ENCODE measurements at regions of chr1 and their contacts with region 1.

Region 1: DNA sequence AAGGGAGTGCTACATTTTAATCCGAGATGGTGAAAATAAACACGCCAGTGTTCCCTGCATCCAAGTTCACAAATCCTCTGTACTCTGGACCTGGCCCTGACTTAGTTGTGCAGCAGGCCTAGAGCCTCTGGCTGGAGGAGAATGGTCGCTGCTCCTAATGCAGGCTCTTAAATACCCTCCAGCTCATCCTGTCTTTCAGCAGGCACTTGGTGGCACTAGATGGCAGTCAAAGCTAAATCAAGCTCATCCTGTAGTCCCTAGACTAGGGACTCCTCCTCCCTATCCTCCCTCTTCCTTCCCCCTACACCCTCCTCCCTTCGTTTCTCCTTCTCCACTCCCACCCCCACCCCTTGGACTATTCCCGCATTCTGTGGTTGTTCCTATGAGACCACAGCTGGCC is 41.6 kb upstream of the MTR start:
- DNase-seq: peak; percentile 33 to 64 (median 44)
- ATAC-seq: peak; percentile 93
- H3K4me3 ChIP-seq: no peak overlapping the region
- H3K27ac ChIP-seq: no peak overlapping the region
- H3K4me1 ChIP-seq: peaks cover 10 to 13% of the 10 kb centered on the region in 2 experiments
- H3K27me3 ChIP-seq: peaks cover 0 to 16% of the 10 kb centered on the region in 2 experiments; a peak in 4 of 5 replicates
- CTCF ChIP-seq: peak; percentile 62 to 71 (median 63)
- EP300 ChIP-seq: no peak
- POLR2A ChIP-seq: no peak
- RAD21 ChIP-seq: peak; percentile 68 to 76

Region 2: GRCh38 chr1:236868625-236869467 is 115.3 kb after region 1 on chr1:
- CTCF ChIA-PET with region 1: interaction called, 11 read pairs
- POLR2A ChIA-PET with region 1: no interaction called
- in situ Hi-C with region 1: no loop called
- intact Hi-C with region 1: no loop called
- DNase-seq: peak; percentile 69 to 82 (median 79)
- ATAC-seq: peak; percentile 95
- H3K4me3 ChIP-seq: no peak overlapping the region
- H3K27ac ChIP-seq: no peak overlapping the region
- H3K4me1 ChIP-seq: no peaks in the 10 kb centered on the region
- H3K27me3 ChIP-seq: no peaks in the 10 kb centered on the region
- CTCF ChIP-seq: peak; percentile 87 to 93 (median 92)
- EP300 ChIP-seq: no peak
- POLR2A ChIP-seq: no peak
- RAD21 ChIP-seq: peak; percentile 81 to 83

Region 3: GRCh38 chr1:236952246-236953003 is 198.9 kb after region 1 on chr1:
- CTCF ChIA-PET with region 1: no interaction called
- POLR2A ChIA-PET with region 1: no interaction called
- in situ Hi-C with region 1: no loop called
- intact Hi-C with region 1: loop called (anchors 2 kb)
- DNase-seq: no peak
- ATAC-seq: no peak
- H3K4me3 ChIP-seq: no peak overlapping the region
- H3K27ac ChIP-seq: no peak overlapping the region
- H3K4me1 ChIP-seq: no peaks in the 10 kb centered on the region; a peak in 1 of 5 replicates
- H3K27me3 ChIP-seq: peaks cover 19 to 45% of the 10 kb centered on the region in 2 experiments
- CTCF ChIP-seq: no peak
- EP300 ChIP-seq: no peak
- POLR2A ChIP-seq: no peak
- RAD21 ChIP-seq: no peak

Region 4: GRCh38 chr1:237124856-237125462 is 371.4 kb after region 1 on chr1:
- CTCF ChIA-PET with region 1: no interaction called
- POLR2A ChIA-PET with region 1: no interaction called
- in situ Hi-C with region 1: no loop called
- intact Hi-C with region 1: loop called (anchors 5 kb)
- DNase-seq: peak; percentile 28 to 50 (median 32)
- ATAC-seq: peak; percentile 84
- H3K4me3 ChIP-seq: no peak overlapping the region
- H3K27ac ChIP-seq: no peak overlapping the region
- H3K4me1 ChIP-seq: no peaks in the 10 kb centered on the region
- H3K27me3 ChIP-seq: no peaks in the 10 kb centered on the region
- CTCF ChIP-seq: peak; percentile 51 to 77 (median 72)
- EP300 ChIP-seq: no peak
- POLR2A ChIP-seq: no peak
- RAD21 ChIP-seq: peak in 1 of 2 experiments; percentile 58; a peak in 3 of 4 replicates

Region 5: GRCh38 chr1:237226172-237226944 is 472.8 kb after region 1 on chr1:
- CTCF ChIA-PET with region 1: no interaction called
- POLR2A ChIA-PET with region 1: no interaction called
- in situ Hi-C with region 1: no loop called
- intact Hi-C with region 1: no loop called
- DNase-seq: no peak
- ATAC-seq: no peak
- H3K4me3 ChIP-seq: no peak overlapping the region
- H3K27ac ChIP-seq: no peak overlapping the region
- H3K4me1 ChIP-seq: no peaks in the 10 kb centered on the region
- H3K27me3 ChIP-seq: no peaks in the 10 kb centered on the region
- CTCF ChIP-seq: no peak
- EP300 ChIP-seq: no peak
- POLR2A ChIP-seq: no peak
- RAD21 ChIP-seq: no peak

Region 6: GRCh38 chr1:237562242-237562823 is 808.8 kb after region 1 on chr1:
- CTCF ChIA-PET with region 1: no interaction called
- POLR2A ChIA-PET with region 1: interaction called, 3 read pairs
- in situ Hi-C with region 1: loop called (anchors 25 kb)
- intact Hi-C with region 1: loop called (anchors 2 kb)
- DNase-seq: peak; percentile 35 to 75 (median 62)
- ATAC-seq: peak; percentile 93
- H3K4me3 ChIP-seq: no peak overlapping the region
- H3K27ac ChIP-seq: no peak overlapping the region
- H3K4me1 ChIP-seq: no peaks in the 10 kb centered on the region
- H3K27me3 ChIP-seq: no peaks in the 10 kb centered on the region
- CTCF ChIP-seq: peak; percentile 29 to 63 (median 58); a peak in 5 of 6 replicates
- EP300 ChIP-seq: no peak
- POLR2A ChIP-seq: no peak
- RAD21 ChIP-seq: peak; percentile 62 to 66

Region 7: GRCh38 chr1:237879195-237879594 is 1125.7 kb after region 1 on chr1:
- CTCF ChIA-PET with region 1: no interaction called
- POLR2A ChIA-PET with region 1: no interaction called
- in situ Hi-C with region 1: no loop called
- intact Hi-C with region 1: no loop called
- DNase-seq: no peak
- ATAC-seq: no peak
- H3K4me3 ChIP-seq: no peak overlapping the region
- H3K27ac ChIP-seq: no peak overlapping the region
- H3K4me1 ChIP-seq: no peaks in the 10 kb centered on the region
- H3K27me3 ChIP-seq: no peaks in the 10 kb centered on the region
- CTCF ChIP-seq: no peak
- EP300 ChIP-seq: no peak
- POLR2A ChIP-seq: no peak
- RAD21 ChIP-seq: no peak

Measured in K562 (cell line).